Mammary epithelial cell (primary cell): ENCODE measurements at regions of chr1 and their contacts with region 1.

Region 1: DNA sequence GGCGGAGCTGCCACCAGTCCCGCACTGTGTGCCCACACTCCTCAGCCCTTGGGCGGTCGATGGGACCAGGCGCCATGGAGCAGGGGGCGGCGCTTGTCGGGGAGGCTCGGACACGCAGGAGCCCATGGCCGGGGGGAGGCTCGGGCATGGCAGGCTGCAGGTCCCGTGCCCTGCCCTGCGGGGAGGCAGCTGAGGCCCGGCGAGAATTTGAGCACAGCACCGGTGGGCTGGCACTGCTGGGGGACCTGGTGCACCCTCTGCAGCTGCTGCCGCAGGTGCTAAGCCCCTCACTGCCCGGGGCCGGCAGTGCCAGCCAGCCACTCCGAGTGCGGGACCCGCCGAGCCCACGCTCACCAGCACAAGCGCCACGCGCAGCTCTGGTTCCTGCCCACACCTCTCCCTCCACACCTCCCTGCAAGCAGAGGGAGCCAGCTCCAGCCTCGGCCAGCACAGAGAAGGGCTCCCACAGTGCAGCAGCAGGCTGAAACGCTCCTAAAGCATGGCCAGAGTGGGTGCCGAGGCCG is 267.7 kb downstream of the RYR2 start:
- DNase-seq: no peak
- H3K4me3 ChIP-seq: no peak overlapping the region
- H3K27ac ChIP-seq: no peak overlapping the region
- H3K4me1 ChIP-seq: no peaks in the 10 kb centered on the region
- H3K27me3 ChIP-seq: no peaks in the 10 kb centered on the region
- CTCF ChIP-seq: no peak

Region 2: GRCh38 chr1:237482777-237483176 is 173.1 kb after region 1 on chr1:
- CTCF ChIA-PET with region 1: interaction called, 23 read pairs
- dilution Hi-C with region 1: no loop called
- in situ Hi-C with region 1: no loop called
- intact Hi-C with region 1: no loop called
- DNase-seq: no peak
- H3K4me3 ChIP-seq: no peak overlapping the region
- H3K27ac ChIP-seq: no peak overlapping the region
- H3K4me1 ChIP-seq: no peaks in the 10 kb centered on the region
- H3K27me3 ChIP-seq: no peaks in the 10 kb centered on the region
- CTCF ChIP-seq: no peak